ENCODE measurements at regions of chr10 and their contacts with region 1.

Region 1: GRCh38 chr10:32378363-32379317 is 31.7 kb upstream of the EPC1 start:
- DNase-seq: peak; percentile 98

Region 2: GRCh38 chr10:32445740-32446535 is 67.3 kb after region 1 on chr10 and contains the start of gene CCDC7:
- intact Hi-C with region 1: loop called in 1 of 2 experiments (anchors 5 kb)
- DNase-seq: peak; percentile 96
- total RNA-seq, gene CCDC7: 32.1 to 46.4 TPM